Posterior vena cava (tissue), 2 donors: ENCODE measurements at regions of chr3 and their contacts with region 1.

Region 1: GRCh38 chr3:37667335-37667734 is 194.3 kb upstream of the CTDSPL start:
- DNase-seq: no peak

Region 2: GRCh38 chr3:37531066-37531720 is 136.1 kb before region 1 on chr3:
- intact Hi-C with region 1: loop called in 1 of 2 experiments (anchors 1 kb)
- DNase-seq: no peak

Region 3: GRCh38 chr3:37645517-37646380 is 21.6 kb before region 1 on chr3:
- intact Hi-C with region 1: no loop called
- DNase-seq: no peak